Naive thymus-derived CD4-positive, alpha-beta T cell (primary cell): ENCODE measurements at regions of chr10 and their contacts with region 1.

Region 1: GRCh38 chr10:75019370-75019769 is 92.1 kb upstream of the SAMD8 start:
- DNase-seq: peak in 7 of 9 donors; percentile 15 to 53 (median 43)
- ATAC-seq: peak; percentile 63
- H3K4me3 ChIP-seq: no peak overlapping the region
- H3K4me3 Mint-ChIP-seq: no peak overlapping the region
- H3K27ac ChIP-seq: no peak overlapping the region
- H3K27ac Mint-ChIP-seq: peak overlapping the region in 5 of 9 donors; percentile 4 to 62 (median 16)
- H3K4me1 ChIP-seq: peaks cover 8 to 12% of the 10 kb centered on the region in 2 donors
- H3K4me1 Mint-ChIP-seq: peaks cover 6 to 38% (median 23%) of the 10 kb centered on the region in 7 donors
- H3K27me3 ChIP-seq: no peaks in the 10 kb centered on the region
- H3K27me3 Mint-ChIP-seq: no peaks in the 10 kb centered on the region

Region 2: GRCh38 chr10:74244097-74244685 is 775.2 kb before region 1 on chr10:
- CTCF ChIA-PET with region 1: interaction called, 8 read pairs
- POLR2A ChIA-PET with region 1: no interaction called
- intact Hi-C with region 1: loop called (anchors 1 kb)
- DNase-seq: peak in 5 of 9 donors; percentile 5 to 45 (median 34)
- ATAC-seq: no peak
- H3K4me3 ChIP-seq: no peak overlapping the region
- H3K4me3 Mint-ChIP-seq: no peak overlapping the region
- H3K27ac ChIP-seq: no peak overlapping the region
- H3K27ac Mint-ChIP-seq: no peak overlapping the region
- H3K4me1 ChIP-seq: no peaks in the 10 kb centered on the region
- H3K4me1 Mint-ChIP-seq: peaks cover 0 to 2% (median 0%) of the 10 kb centered on the region in 7 donors
- H3K27me3 ChIP-seq: no peaks in the 10 kb centered on the region
- H3K27me3 Mint-ChIP-seq: no peaks in the 10 kb centered on the region

Region 3: DNA sequence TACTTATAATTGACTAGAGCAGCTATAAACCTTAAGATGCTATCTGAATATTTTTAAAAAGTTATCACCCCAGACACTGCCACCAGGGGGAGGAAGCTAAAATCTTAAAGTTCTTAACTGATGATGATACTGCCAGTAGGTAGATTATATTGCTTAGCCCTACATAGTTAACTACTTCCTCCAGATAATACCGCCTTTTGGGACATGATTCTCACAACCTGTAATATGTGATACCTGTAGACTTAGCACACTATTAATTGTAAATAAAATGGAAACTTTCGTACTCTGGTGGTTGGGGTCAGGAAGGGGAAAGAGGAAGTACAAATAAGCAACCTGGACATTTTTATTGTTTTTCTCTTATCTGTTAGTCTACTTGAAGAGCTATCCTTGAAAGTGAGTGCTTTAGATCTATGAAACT is 599.4 kb before region 1 on chr10:
- CTCF ChIA-PET with region 1: interaction called, 3 read pairs
- POLR2A ChIA-PET with region 1: no interaction called
- intact Hi-C with region 1: loop called (anchors 1 kb)
- DNase-seq: peak in 7 of 9 donors; percentile 15 to 53 (median 48)
- ATAC-seq: peak; percentile 63
- H3K4me3 ChIP-seq: no peak overlapping the region
- H3K4me3 Mint-ChIP-seq: no peak overlapping the region
- H3K27ac ChIP-seq: no peak overlapping the region
- H3K27ac Mint-ChIP-seq: peak overlapping the region in 1 of 9 donors; percentile 57
- H3K4me1 ChIP-seq: no peaks in the 10 kb centered on the region
- H3K4me1 Mint-ChIP-seq: peaks cover 5 to 12% (median 7%) of the 10 kb centered on the region in 7 donors
- H3K27me3 ChIP-seq: no peaks in the 10 kb centered on the region
- H3K27me3 Mint-ChIP-seq: no peaks in the 10 kb centered on the region

Region 4: GRCh38 chr10:74898201-74898976 is 121.0 kb before region 1 on chr10:
- CTCF ChIA-PET with region 1: no interaction called
- POLR2A ChIA-PET with region 1: no interaction called
- intact Hi-C with region 1: loop called in 1 of 2 experiments (anchors 10 kb)
- DNase-seq: peak in 1 of 9 donors; percentile 13
- ATAC-seq: peak; percentile 47
- H3K4me3 ChIP-seq: no peak overlapping the region
- H3K4me3 Mint-ChIP-seq: peak overlapping the region in 6 of 10 donors; percentile 20 to 47 (median 26)
- H3K27ac ChIP-seq: no peak overlapping the region
- H3K27ac Mint-ChIP-seq: peak overlapping the region in 2 of 9 donors; percentile 28 to 85
- H3K4me1 ChIP-seq: peaks cover 9 to 23% of the 10 kb centered on the region in 2 donors
- H3K4me1 Mint-ChIP-seq: peaks cover 39 to 85% (median 79%) of the 10 kb centered on the region in 7 donors
- H3K27me3 ChIP-seq: no peaks in the 10 kb centered on the region
- H3K27me3 Mint-ChIP-seq: no peaks in the 10 kb centered on the region

Region 5: GRCh38 chr10:74977913-74978847 is 41.2 kb before region 1 on chr10:
- CTCF ChIA-PET with region 1: no interaction called
- POLR2A ChIA-PET with region 1: no interaction called
- intact Hi-C with region 1: loop called in 1 of 2 experiments (anchors 2 kb)
- DNase-seq: peak in 7 of 9 donors; percentile 11 to 68 (median 46)
- ATAC-seq: peak; percentile 93
- H3K4me3 ChIP-seq: no peak overlapping the region
- H3K4me3 Mint-ChIP-seq: peak overlapping the region in 6 of 10 donors; percentile 18 to 71 (median 44)
- H3K27ac ChIP-seq: no peak overlapping the region
- H3K27ac Mint-ChIP-seq: peak overlapping the region in 4 of 9 donors; percentile 45 to 82 (median 55)
- H3K4me1 ChIP-seq: peaks cover 13 to 19% of the 10 kb centered on the region in 2 donors
- H3K4me1 Mint-ChIP-seq: peaks cover 19 to 42% (median 32%) of the 10 kb centered on the region in 7 donors
- H3K27me3 ChIP-seq: no peaks in the 10 kb centered on the region
- H3K27me3 Mint-ChIP-seq: no peaks in the 10 kb centered on the region